ENCODE measurements at regions of chr20 and their contacts with region 1.

Region 1: DNA sequence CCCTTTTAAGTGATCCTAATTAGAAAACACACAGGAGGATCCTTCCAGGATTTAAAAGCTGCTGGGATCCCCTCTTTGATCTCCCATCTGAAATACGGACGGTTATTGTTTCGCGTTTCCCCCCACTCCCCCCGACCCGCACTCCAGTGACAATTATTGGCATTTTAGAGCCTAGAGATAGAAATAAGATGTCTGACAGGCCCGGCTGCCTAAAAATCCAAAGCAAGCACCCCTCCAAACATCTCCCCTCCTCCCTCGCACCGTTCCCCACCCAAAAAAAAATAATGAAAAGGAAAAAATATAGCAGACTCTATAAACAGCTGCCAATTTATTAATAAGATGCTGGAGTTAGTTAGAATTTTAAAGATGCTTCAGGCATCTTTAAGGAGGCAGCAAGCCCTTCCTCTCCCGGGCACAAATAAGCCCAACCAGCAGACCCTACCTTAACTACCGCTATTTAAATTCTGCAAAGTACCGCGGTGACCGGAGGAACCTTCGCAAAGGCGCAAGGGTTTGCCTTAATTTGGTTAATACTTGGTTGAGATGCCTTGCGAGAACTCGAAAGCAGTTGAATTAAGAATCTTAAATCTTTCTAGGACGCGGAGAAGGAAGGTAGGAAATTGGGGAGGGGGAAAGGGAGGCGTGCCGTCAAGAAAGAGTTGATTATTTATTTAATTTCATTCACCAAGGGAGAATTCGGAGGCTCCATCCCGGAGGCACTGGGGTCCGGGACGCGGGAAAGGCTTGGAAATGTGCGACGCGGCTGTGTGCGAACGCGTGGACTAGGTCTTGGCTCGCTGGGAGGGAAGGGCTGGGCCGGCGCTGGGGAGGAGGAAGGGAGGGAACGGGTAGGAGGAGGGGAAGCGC is 1.5 kb upstream of the ISM1 start:
- DNase-seq: no peak
- H3K4me3 ChIP-seq: peak overlapping the region; percentile 10; the same call in 1 of the 2 replicates
- H3K27ac ChIP-seq: no peak overlapping the region
- H3K27me3 ChIP-seq: peaks cover 48% of the 10 kb centered on the region
- CTCF ChIP-seq: no peak

Region 2: DNA sequence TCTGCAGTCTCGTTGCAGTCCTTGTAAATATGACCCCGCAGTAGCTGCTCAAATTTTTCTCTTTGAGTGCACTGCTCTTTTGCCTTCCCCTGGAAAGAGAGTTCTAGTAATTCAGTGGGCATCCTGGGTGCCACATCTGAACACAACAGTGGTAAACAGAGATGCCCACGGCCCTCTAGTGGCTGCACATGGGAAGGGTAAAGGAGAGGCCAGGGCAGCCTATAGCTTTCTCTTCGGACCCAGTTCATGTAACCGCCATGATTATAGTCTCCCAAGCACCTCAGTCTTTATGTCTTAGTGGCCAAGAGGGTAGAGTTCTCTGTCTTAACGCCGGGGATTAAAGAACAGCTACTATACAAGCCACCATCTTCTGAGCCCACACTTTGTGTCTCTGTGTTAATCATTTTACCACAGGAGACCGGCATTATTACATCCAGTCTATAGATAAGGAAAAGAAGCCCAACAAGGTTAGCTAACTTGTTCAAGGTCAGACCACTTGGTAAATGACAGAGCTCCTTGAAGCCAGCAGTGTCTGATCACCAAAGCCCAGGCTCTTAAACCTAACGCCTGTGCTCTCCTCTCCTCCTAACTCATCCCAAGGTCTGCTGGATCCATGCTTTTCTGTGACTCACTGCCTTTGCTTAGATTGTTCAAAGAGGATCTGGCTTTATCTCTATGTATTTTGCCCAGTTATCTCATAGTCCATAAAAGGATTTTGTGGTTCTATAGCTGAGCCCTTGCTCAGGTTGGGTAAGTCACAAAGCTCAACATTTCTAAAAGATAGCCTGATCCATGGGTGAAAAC is 83.3 kb after region 1 on chr20:
- CTCF ChIA-PET with region 1: interaction called, 11 read pairs
- POLR2A ChIA-PET with region 1: no interaction called
- DNase-seq: no peak
- H3K4me3 ChIP-seq: no peak overlapping the region
- H3K27ac ChIP-seq: no peak overlapping the region
- H3K27me3 ChIP-seq: no peaks in the 10 kb centered on the region
- CTCF ChIP-seq: peak; percentile 61

Region 3: DNA sequence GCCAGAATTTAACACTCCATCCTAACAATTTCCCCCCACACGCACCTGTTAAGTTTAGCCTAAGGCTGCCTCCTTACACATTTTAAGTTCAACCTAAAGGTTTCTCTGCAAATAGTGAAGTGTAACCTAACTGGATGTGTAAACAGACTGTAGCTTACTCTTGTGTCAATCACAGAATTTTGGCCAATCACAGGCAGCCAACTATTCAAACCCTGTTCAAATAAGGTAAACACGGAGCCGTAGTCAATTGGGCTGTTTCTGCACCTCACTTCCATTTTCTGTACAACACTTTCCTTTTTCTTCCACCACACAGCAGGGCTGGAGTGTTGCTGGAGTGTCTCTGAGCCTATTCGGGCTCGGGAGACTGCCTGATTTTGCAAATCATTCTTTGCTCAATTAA is 93.7 kb after region 1 on chr20:
- CTCF ChIA-PET with region 1: no interaction called
- POLR2A ChIA-PET with region 1: no interaction called
- DNase-seq: no peak
- H3K4me3 ChIP-seq: no peak overlapping the region
- H3K27ac ChIP-seq: no peak overlapping the region
- H3K27me3 ChIP-seq: no peaks in the 10 kb centered on the region
- CTCF ChIP-seq: no peak

Measured in AG04450 (cell line).